ENCODE measurements at regions of chr6 and their contacts with region 1.

Region 1: DNA sequence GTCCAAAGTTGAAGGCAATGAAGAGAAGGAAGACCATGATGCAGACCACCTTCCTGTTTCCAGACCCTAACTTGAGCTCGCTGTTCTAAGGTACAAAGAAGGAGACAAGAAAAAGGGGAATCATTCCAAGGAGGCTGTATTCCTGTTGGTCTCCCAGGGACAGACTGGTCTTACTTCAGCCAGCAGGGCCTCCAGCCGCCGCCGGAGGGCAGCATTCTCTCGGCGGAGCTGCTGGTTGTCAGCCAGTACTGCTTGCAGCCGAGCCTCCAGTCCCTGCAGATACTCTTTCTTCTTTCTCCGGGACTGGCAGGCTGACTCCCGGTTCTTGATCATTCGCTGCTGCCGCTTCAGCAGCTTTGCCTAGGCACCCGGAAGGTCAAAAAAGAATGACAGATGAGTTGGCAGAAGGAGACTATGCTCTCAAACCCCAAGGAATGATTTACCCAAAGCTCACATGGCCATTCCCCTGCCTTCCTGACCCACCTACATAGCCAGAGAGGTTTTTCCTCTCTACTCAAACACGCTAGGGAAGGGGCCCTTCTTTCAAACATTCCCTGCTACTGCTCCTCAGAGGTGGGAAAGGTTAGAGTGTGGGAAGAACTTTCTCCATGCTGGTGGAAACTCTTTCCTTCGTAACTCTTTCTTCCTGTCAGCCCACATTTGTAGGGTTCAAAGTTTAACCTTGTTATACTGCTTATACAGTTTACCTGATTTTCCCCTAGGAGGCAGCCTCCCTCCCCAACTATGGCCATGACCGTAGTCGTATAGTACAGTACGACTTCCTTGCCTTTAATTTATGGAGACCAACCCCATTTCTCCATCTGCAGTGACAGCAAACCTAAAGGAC is 9.0 kb downstream of the ATF6B start:
- DNase-seq: peak in 1 of 2 donors; percentile 90
- H3K4me3 ChIP-seq: no peak overlapping the region
- H3K27ac ChIP-seq: peak overlapping the region; percentile 34
- H3K4me1 ChIP-seq: peaks cover 16% of the 10 kb centered on the region
- H3K27me3 ChIP-seq: no peaks in the 10 kb centered on the region
- CTCF ChIP-seq: peak; percentile 73 to 89 (median 89)
- POLR2A ChIP-seq: no peak

Region 2: DNA sequence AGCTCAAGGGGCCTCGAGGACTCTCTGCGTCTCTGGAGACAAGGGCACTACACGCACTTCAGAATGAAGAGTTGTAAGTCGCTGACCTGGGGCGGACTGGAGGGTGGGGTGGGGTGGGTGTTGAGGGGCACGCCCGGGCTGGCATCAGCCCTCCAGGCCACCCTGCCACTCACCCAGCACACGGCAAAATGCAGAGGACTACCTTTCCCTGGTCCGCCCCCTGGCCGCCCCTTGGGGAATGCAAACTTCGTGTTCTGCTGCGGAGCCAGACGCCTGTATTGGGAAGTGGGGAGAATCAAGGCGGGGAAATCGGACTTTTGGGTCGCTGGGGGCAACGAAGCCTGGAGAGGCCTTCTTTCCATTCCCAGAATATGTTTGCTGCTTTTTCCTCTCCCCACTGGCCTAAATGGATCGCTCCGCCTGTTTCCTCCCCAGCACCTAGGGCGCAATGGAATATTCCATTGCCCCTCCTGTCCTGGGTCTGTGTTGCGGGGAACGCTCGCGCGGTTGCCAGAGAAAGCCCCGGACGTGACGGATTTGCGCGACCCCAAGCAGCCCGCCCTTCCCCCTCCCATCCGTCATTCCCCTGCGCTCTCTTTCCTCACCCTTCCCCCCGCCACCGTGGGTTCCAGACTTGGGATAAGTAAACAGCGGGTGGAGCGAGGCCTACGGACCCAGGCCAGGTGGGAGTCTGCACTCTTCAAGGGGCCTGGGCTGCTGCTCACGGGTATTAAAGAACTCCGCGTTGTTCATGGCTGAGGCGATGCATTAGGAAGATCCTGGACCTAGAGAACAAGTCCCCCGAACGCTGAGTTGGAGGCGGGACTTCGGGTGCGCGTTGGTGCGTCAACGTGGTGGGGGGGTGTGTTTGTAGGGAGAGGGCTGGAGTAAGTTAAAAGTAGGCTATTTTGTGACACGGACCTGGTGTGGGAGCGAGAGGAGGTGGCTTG is 34.8 kb after region 1 on chr6 and contains the start of gene PPT2:
- intact Hi-C with region 1: loop called (anchors 5 kb)
- DNase-seq: no peak
- H3K4me3 ChIP-seq: peak within 1 kb of the TSS; percentile 75 to 88
- H3K27ac ChIP-seq: peak within 1 kb of the TSS; percentile 94
- H3K4me1 ChIP-seq: peaks cover 49% of the 10 kb centered on the region
- H3K27me3 ChIP-seq: no peaks in the 10 kb centered on the region
- CTCF ChIP-seq: no peak
- POLR2A ChIP-seq: peak in 1 of 2 donors; percentile 49
- total RNA-seq, gene PPT2: 31.9 TPM

Region 3: DNA sequence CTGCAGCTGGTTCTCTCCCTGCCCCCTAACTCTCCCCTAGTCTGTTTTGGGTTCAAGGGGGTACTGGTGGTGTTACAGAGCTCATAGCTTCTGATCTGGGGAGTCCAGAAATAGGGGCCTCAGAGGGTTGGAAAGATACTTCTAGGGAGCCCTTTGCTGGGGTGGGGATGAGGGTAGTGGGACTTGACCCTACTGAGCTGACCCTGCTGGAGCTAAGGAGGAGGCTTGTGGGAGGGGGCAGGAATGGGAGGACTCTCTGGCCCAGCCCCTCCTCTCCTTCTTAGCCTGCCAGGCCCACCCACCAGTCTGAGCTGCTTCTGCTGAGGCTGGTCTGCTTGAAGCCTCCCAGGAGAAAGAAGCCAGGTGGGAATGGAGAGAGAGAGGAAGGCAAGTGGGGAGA is 45.3 kb after region 1 on chr6 and contains the start of gene EGFL8:
- intact Hi-C with region 1: no loop called
- DNase-seq: no peak
- H3K4me3 ChIP-seq: no peak within 1 kb of the TSS
- H3K27ac ChIP-seq: peak within 1 kb of the TSS; percentile 39
- H3K4me1 ChIP-seq: no peaks in the 10 kb centered on the region
- H3K27me3 ChIP-seq: no peaks in the 10 kb centered on the region
- CTCF ChIP-seq: no peak
- POLR2A ChIP-seq: no peak
- total RNA-seq, gene EGFL8: 13.3 TPM

Region 4: GRCh38 chr6:32195652-32195901 is 76.6 kb after region 1 on chr6:
- intact Hi-C with region 1: loop called (anchors 5 kb)
- DNase-seq: peak; percentile 100
- H3K4me3 ChIP-seq: peak overlapping the region; percentile 72 to 87
- H3K27ac ChIP-seq: peak overlapping the region; percentile 99
- H3K4me1 ChIP-seq: peaks cover 43% of the 10 kb centered on the region
- H3K27me3 ChIP-seq: no peaks in the 10 kb centered on the region
- CTCF ChIP-seq: peak in 2 of 3 experiments; percentile 22 to 58
- POLR2A ChIP-seq: no peak

Measured in vagina (tissue), 2 donors.